ENCODE measurements at regions of chr9 and their contacts with region 1.

Region 1: GRCh38 chr9:121992571-121993212 is 100.4 kb downstream of the TTLL11 start:
- DNase-seq: peak; percentile 60
- H3K4me3 ChIP-seq: no peak overlapping the region
- H3K27ac ChIP-seq: no peak overlapping the region
- H3K4me1 ChIP-seq: no peaks in the 10 kb centered on the region
- H3K27me3 ChIP-seq: no peaks in the 10 kb centered on the region
- CTCF ChIP-seq: peak; percentile 65 to 75

Region 2: GRCh38 chr9:121640076-121640475 is 352.6 kb before region 1 on chr9:
- CTCF ChIA-PET with region 1: no interaction called
- dilution Hi-C with region 1: no loop called
- in situ Hi-C with region 1: no loop called
- intact Hi-C with region 1: loop called (anchors 1 kb)
- DNase-seq: no peak
- H3K4me3 ChIP-seq: no peak overlapping the region
- H3K27ac ChIP-seq: no peak overlapping the region
- H3K4me1 ChIP-seq: peaks cover 23% of the 10 kb centered on the region
- H3K27me3 ChIP-seq: no peaks in the 10 kb centered on the region
- CTCF ChIP-seq: peak; percentile 26 to 55

Region 3: DNA sequence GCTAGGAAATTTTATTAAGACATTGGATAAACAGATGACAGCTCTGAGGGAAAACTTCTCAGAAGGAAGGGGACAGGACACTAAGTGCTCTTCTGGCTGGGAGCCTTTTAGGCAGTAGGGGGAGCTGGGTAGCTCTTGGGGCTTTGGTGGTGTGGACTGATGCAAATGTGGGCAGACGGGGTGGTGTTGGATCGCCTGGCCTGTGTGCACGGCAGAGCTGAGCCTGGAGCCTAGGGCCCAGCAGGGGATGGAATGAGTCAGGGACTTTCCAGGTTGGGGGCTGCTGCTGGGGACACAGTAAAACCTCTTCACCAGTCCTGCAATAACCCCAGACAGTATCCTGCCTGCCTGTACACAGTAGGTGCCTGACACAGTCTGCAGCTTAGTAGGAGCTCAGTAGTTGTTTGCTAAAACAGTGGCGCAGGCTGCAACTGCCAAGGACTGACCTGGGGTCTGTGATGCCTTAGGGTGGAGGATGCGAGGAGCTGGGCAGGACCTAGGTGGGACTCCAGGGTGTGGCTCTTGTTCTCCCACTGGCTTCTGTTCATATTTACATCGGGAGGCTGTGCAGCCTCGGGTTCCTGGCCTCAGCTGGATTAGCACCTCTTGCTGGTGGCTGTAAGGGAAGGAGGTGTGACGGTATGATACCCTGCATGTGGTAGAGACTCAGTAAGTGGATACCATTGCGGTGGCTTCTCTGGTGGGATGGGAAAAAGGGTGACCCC is 257.5 kb before region 1 on chr9:
- CTCF ChIA-PET with region 1: no interaction called
- dilution Hi-C with region 1: no loop called
- in situ Hi-C with region 1: no loop called
- intact Hi-C with region 1: loop called (anchors 2 kb)
- DNase-seq: peak; percentile 70
- H3K4me3 ChIP-seq: no peak overlapping the region
- H3K27ac ChIP-seq: peak overlapping the region; percentile 68
- H3K4me1 ChIP-seq: peaks cover 69% of the 10 kb centered on the region
- H3K27me3 ChIP-seq: no peaks in the 10 kb centered on the region
- CTCF ChIP-seq: peak; percentile 50 to 73

Region 4: DNA sequence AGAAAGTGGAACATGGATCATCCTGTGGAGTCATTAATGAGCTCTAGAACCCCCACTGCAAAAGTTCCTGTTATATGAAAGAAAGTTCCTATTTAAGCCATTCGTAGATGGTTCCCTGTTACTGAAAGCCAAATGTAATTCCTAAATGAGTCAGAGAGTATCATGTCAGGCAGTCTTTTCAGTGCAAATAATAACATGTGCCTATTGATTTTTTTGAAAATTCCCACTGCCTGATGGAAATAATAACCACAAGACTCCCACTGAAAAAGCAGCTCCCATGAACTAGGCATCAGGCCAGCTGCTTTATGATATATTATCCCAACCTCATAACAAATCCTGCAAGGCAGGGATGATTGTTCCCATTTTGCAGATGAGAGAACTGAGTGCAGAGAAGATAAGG is 124.1 kb before region 1 on chr9:
- CTCF ChIA-PET with region 1: no interaction called
- dilution Hi-C with region 1: no loop called
- in situ Hi-C with region 1: no loop called
- intact Hi-C with region 1: loop called (anchors 5 kb)
- DNase-seq: no peak
- H3K4me3 ChIP-seq: no peak overlapping the region
- H3K27ac ChIP-seq: no peak overlapping the region
- H3K4me1 ChIP-seq: no peaks in the 10 kb centered on the region
- H3K27me3 ChIP-seq: no peaks in the 10 kb centered on the region
- CTCF ChIP-seq: no peak

Region 5: GRCh38 chr9:121972501-121972981 is 20.2 kb before region 1 on chr9:
- CTCF ChIA-PET with region 1: no interaction called
- dilution Hi-C with region 1: no loop called
- in situ Hi-C with region 1: no loop called
- intact Hi-C with region 1: no loop called
- DNase-seq: peak; percentile 95
- H3K4me3 ChIP-seq: no peak overlapping the region
- H3K27ac ChIP-seq: peak overlapping the region; percentile 55
- H3K4me1 ChIP-seq: peaks cover 22% of the 10 kb centered on the region
- H3K27me3 ChIP-seq: no peaks in the 10 kb centered on the region
- CTCF ChIP-seq: no peak

Region 6: GRCh38 chr9:122029898-122030297 is 37.2 kb after region 1 on chr9:
- CTCF ChIA-PET with region 1: no interaction called
- dilution Hi-C with region 1: no loop called
- in situ Hi-C with region 1: no loop called
- intact Hi-C with region 1: no loop called
- DNase-seq: no peak
- H3K4me3 ChIP-seq: no peak overlapping the region
- H3K27ac ChIP-seq: no peak overlapping the region
- H3K4me1 ChIP-seq: no peaks in the 10 kb centered on the region
- H3K27me3 ChIP-seq: no peaks in the 10 kb centered on the region
- CTCF ChIP-seq: no peak